ENCODE measurements at regions of chr15 and their contacts with region 1.

Region 1: GRCh38 chr15:78437762-78438302 is at the start of gene IREB2:
- DNase-seq: peak; percentile 100
- H3K4me3 ChIP-seq: peak within 1 kb of the TSS; percentile 75 to 99 (median 93)
- H3K27ac ChIP-seq: peak within 1 kb of the TSS; percentile 84
- H3K4me1 ChIP-seq: peaks cover 17% of the 10 kb centered on the region
- H3K27me3 ChIP-seq: peaks cover 0 to 5% of the 10 kb centered on the region in 2 experiments
- CTCF ChIP-seq: no peak
- POLR2A ChIP-seq: peak; percentile 98
- total RNA-seq, gene IREB2: 51.4 and 54.3 TPM in 2 replicates

Region 2: GRCh38 chr15:78149068-78149804 is 288.6 kb before region 1 on chr15 and contains the start of gene IDH3A:
- CTCF ChIA-PET with region 1: no interaction called
- POLR2A ChIA-PET with region 1: no interaction called
- dilution Hi-C with region 1: no loop called
- intact Hi-C with region 1: loop called (anchors 1 kb)
- DNase-seq: peak; percentile 95
- H3K4me3 ChIP-seq: peak within 1 kb of the TSS; percentile 54 to 94 (median 71)
- H3K27ac ChIP-seq: peak within 1 kb of the TSS; percentile 81
- H3K4me1 ChIP-seq: peaks cover 11% of the 10 kb centered on the region
- H3K27me3 ChIP-seq: no peaks in the 10 kb centered on the region
- CTCF ChIP-seq: no peak
- POLR2A ChIP-seq: peak; percentile 64
- total RNA-seq, gene IDH3A: 62.8 and 63.9 TPM in 2 replicates

Region 3: DNA sequence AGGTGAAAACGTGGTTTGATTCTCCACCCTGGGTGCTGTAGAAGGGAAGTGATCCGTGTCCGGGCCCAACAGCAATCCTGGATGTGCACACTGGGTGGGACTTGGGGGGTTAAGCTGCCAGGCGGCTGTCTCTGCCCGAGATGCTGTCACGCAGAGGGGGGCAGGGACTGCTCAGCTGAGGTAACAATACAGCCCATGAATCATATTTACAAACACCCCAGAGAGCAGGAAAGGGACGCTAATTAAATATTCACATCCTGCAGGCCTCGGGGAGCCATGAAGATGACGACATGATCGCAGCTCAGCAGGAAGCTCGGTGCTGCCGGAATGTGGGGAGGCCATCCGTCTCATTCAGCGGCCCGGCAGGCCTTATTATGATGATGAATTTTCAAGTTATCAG is 115.6 kb before region 1 on chr15:
- CTCF ChIA-PET with region 1: no interaction called
- POLR2A ChIA-PET with region 1: no interaction called
- dilution Hi-C with region 1: no loop called
- intact Hi-C with region 1: loop called (anchors 1 kb)
- DNase-seq: peak; percentile 92
- H3K4me3 ChIP-seq: no peak overlapping the region
- H3K27ac ChIP-seq: peak overlapping the region; percentile 92
- H3K4me1 ChIP-seq: peaks cover 16% of the 10 kb centered on the region
- H3K27me3 ChIP-seq: no peaks in the 10 kb centered on the region
- CTCF ChIP-seq: no peak
- POLR2A ChIP-seq: peak; percentile 60

Region 4: DNA sequence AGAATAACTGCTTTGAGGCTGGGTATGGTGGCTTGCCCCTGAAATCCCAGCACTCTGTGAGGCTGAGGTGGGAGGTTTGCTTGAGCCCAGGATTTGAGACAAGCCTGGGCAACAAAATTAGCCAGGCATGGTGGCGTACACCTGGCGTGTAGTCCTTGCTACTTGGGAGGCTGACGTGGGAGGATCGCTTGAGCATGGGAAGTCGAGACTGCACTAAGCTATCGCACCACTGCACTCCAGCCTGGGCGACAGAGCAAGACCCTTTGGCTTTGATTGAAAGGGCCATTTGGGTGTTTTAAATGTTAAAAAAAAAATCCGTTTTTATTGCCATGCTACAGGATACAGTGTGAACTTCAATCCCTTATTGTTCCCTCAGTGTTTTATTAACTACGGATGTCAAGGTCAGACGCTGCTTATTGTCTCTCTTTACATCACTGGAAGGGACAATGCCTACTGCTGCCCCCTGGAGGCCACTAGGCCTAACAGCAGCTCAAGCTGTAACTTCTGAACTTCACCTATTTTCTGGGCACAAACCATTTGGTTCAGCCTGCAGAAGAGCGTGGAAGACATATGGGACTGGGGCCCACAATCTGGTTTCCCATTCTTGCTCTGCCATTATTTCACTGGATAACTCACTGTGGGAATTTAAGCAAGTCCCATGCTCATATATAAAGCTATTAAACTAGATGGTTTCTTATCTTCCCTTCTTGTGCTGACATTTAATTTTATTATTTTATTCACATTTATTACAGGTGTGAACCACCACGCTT is 15.1 kb before region 1 on chr15:
- CTCF ChIA-PET with region 1: interaction called, 24 read pairs
- POLR2A ChIA-PET with region 1: interaction called, 4 read pairs
- dilution Hi-C with region 1: no loop called
- intact Hi-C with region 1: no loop called
- DNase-seq: peak; percentile 71
- H3K4me3 ChIP-seq: no peak overlapping the region
- H3K27ac ChIP-seq: no peak overlapping the region
- H3K4me1 ChIP-seq: no peaks in the 10 kb centered on the region
- H3K27me3 ChIP-seq: peaks cover 9% of the 10 kb centered on the region in 2 experiments
- CTCF ChIP-seq: peak; percentile 91
- POLR2A ChIP-seq: no peak

Region 5: GRCh38 chr15:78455749-78456148 is 17.9 kb after region 1 on chr15:
- CTCF ChIA-PET with region 1: no interaction called
- POLR2A ChIA-PET with region 1: no interaction called
- dilution Hi-C with region 1: no loop called
- intact Hi-C with region 1: no loop called
- DNase-seq: no peak
- H3K4me3 ChIP-seq: no peak overlapping the region
- H3K27ac ChIP-seq: no peak overlapping the region
- H3K4me1 ChIP-seq: peaks cover 5% of the 10 kb centered on the region
- H3K27me3 ChIP-seq: no peaks in the 10 kb centered on the region
- CTCF ChIP-seq: no peak
- POLR2A ChIP-seq: no peak

Region 6: DNA sequence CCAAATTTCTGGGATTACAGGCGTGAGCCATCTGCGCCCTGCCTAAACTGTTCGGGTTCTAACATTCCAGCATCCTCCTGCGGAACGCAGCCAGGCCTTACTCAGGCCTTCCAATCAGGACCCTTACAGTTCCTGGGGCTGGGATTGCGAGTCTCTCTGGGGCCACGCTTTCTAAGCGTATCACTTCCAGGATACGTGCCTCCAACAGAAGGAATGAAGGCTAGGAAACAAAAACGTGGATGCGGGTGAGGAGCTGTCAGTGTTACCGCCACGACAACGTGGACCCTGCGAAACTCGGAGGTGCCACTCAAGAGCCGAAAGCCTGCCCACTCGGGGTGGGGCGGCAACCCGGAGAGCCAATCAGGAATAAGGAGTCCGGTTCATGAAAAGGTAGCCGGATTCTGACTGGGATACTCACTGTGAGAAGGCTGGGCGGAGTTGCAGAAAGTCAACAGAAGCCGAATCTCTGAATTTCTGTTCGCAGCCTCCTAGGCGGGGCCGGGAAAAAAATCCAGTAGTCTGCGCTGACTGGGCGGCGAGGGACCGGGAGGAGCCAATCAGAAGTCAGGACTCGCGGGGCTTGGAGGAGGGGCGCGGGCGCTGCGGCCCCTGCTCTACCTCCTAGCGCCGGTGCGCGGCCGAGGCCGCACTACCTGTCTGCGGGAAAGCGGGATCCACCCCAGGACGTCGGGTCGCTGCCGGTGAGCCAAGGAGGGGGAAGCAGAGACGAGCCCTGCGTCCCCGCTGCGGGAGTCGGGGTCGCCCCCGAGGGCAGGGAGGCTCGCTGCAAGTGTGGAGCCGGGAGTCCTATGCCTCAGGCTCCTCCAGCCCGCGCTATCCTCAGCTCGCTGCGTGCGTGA is 69.4 kb after region 1 on chr15 and contains the start of gene HYKK:
- CTCF ChIA-PET with region 1: no interaction called
- POLR2A ChIA-PET with region 1: no interaction called
- dilution Hi-C with region 1: no loop called
- intact Hi-C with region 1: loop called (anchors 2 kb)
- DNase-seq: peak; percentile 98
- H3K4me3 ChIP-seq: peak within 1 kb of the TSS; percentile 35 to 65 (median 65)
- H3K27ac ChIP-seq: no peak within 1 kb of the TSS
- H3K4me1 ChIP-seq: peaks cover 4% of the 10 kb centered on the region
- H3K27me3 ChIP-seq: peaks cover 3 to 4% of the 10 kb centered on the region in 2 experiments
- CTCF ChIP-seq: peak in 1 of 2 donors; percentile 21
- POLR2A ChIP-seq: no peak
- total RNA-seq, gene HYKK: 2.1 and 2.7 TPM in 2 replicates

Region 7: DNA sequence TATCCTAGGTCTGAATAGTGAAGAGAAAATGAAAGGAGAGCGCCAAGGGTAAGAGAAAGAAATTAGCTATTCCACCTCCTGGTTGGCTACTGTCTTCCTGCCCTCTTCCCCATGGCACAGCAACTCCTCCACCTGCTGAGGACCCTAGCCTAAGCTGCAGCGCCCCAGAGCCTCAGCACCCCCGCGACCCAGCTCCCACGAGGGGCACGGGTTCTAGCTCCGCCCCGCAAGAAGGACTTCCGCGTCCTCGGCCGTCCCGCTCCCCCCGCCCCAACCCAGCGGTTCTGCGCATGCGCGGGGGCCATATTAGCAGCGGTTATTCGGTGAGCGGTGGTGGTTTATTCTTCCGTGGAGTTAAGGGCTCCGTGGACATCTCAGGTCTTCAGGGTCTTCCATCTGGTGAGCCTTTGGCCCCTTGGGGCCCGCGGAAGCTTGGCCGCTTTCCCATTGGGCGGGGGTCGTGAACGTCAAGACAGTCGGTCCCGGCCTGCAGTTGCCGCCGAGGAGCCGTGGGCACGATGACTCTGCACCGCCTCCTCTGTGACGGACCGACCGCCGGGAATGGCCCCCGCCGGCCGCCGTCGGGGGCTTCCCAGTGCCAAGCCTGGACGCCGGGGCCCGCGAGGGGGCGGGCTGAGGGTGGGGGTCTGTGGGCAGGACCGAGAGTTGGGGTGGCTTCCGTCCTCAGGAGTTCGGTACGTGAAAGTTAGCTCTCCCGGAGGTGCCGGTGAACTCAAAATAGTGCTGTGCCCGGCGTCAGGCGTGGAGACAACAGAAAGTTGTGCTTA is 102.5 kb after region 1 on chr15 and contains the start of gene PSMA4:
- CTCF ChIA-PET with region 1: no interaction called
- POLR2A ChIA-PET with region 1: interaction called, 3 read pairs
- dilution Hi-C with region 1: no loop called
- intact Hi-C with region 1: loop called (anchors 1 kb)
- DNase-seq: peak; percentile 92
- H3K4me3 ChIP-seq: peak within 1 kb of the TSS; percentile 67 to 96 (median 88)
- H3K27ac ChIP-seq: peak within 1 kb of the TSS; percentile 92
- H3K4me1 ChIP-seq: peaks cover 13% of the 10 kb centered on the region
- H3K27me3 ChIP-seq: no peaks in the 10 kb centered on the region
- CTCF ChIP-seq: peak in 1 of 2 donors; percentile 29
- POLR2A ChIP-seq: no peak
- total RNA-seq, gene PSMA4: 250 and 260 TPM in 2 replicates